ENCODE measurements at regions of chr14 and their contacts with region 1.

Region 1: GRCh38 chr14:54773171-54773975 is 129.3 kb downstream of the GCH1 start:
- DNase-seq: peak; percentile 76
- ATAC-seq: peak; percentile 92
- H3K4me3 Mint-ChIP-seq: 0 out of 2 replicates have a peak overlapping the region, but pooled peaks have one; percentile 29
- H3K27ac Mint-ChIP-seq: peak overlapping the region; percentile 56
- H3K4me1 Mint-ChIP-seq: peaks cover 21% of the 10 kb centered on the region
- H3K27me3 Mint-ChIP-seq: no peaks in the 10 kb centered on the region
- CTCF ChIP-seq: peak; percentile 37

Region 2: GRCh38 chr14:54566410-54567223 is 206.8 kb before region 1 on chr14 and contains the start of gene SAMD4A:
- CTCF ChIA-PET with region 1: interaction called, 138 read pairs
- POLR2A ChIA-PET with region 1: interaction called, 19 read pairs
- DNase-seq: peak; percentile 65
- ATAC-seq: peak; percentile 13
- H3K4me3 Mint-ChIP-seq: peak within 1 kb of the TSS; percentile 94
- H3K27ac Mint-ChIP-seq: 0 out of 2 replicates have a peak within 1 kb of the TSS, but pooled peaks have one; percentile 70
- H3K4me1 Mint-ChIP-seq: peaks cover 21% of the 10 kb centered on the region
- H3K27me3 Mint-ChIP-seq: peaks cover 36% of the 10 kb centered on the region
- CTCF ChIP-seq: no peak
- total RNA-seq, gene SAMD4A: 5.2 to 6.0 TPM (median 5.3 TPM) in 3 replicates

Region 3: DNA sequence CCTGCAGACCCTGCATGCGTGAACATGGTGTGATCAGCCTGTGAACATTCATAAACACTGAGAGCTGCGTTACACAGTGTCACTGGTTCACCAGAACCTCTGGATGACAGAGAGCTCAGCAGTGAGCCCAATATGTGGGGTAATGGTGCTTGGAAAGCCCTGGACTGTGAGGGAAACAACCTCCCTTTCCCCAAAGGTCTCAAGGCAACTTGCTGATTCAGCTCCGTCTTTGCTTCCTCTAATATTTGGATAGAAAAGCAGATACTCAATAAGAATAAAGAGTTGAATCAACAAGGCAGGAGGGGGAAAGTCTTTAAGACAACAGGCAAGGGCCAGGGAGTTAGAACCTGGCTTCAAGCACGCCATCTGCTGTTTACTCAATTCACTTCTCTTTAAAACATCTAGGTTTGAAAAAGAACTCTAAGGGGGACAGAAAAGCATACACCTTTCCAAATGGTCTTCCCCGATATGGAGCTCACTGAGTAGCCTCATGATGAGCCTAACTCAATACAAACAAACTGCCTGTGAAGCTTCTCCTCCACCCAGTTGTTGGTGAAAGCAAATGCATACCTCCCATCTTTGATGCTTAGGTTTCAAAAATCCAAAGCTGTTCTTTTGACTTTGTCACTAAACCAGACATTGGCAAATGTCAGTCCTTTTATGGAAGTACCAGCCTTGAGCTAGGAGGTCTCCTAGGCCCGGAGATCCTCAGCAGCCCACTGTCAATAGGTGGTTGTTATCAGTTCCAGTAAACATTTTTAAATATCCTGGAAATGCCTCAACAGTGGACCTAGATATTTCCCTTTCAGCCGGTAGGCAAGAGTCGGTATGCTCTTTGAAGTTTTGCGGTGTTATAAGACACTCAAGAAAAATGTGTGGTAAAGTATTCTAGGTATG is 130.3 kb before region 1 on chr14:
- CTCF ChIA-PET with region 1: interaction called, 17 read pairs
- POLR2A ChIA-PET with region 1: no interaction called
- DNase-seq: no peak
- ATAC-seq: peak; percentile 73
- H3K4me3 Mint-ChIP-seq: no peak overlapping the region
- H3K27ac Mint-ChIP-seq: no peak overlapping the region
- H3K4me1 Mint-ChIP-seq: peaks cover 19% of the 10 kb centered on the region
- H3K27me3 Mint-ChIP-seq: no peaks in the 10 kb centered on the region
- CTCF ChIP-seq: no peak

Region 4: DNA sequence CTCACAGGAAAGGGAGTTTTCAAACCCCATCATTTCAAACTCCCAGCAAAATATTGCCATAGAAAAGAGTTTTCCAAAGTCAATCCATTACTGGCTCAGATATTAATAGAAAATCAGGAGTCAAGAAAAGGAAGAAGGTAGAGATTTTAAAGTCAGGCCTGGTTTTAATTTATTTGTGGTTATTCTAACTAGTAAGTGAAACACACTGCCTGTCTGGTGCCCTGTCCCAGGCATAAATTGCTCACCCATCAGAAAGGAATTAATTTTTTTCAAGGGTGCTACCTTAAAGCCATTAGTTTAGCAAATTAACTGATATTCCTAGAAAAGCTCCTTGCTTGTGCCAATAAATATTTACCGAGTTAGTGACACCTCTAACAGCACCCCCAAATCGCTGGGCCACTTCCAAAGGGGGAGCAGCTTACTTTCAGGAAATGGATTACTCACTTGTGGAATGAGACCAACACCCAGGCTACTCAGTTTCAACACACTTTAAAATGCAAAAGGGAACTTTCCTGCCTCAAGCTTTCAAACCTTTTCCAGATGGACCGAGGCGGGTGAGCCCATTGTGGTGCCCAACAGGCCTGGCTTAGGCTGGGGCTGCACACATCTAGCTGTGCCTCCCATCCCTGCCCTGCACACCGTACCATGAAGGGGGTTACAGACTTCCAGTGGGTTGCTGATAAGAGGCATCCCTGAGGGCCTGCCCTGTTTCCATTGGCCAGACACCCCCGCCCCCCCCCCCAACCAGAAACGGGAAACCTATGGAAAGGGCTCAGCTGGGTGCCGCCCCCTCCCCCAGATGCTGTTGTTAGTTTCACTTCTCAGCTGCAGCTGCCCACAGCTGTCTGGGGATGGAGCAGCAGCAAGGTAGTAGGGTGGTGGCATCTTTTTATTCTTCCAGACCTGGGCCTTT is 89.2 kb before region 1 on chr14:
- CTCF ChIA-PET with region 1: interaction called, 31 read pairs
- POLR2A ChIA-PET with region 1: no interaction called
- DNase-seq: peak; percentile 69
- ATAC-seq: peak; percentile 88
- H3K4me3 Mint-ChIP-seq: peak overlapping the region; percentile 50
- H3K27ac Mint-ChIP-seq: peak overlapping the region; percentile 81
- H3K4me1 Mint-ChIP-seq: peaks cover 36% of the 10 kb centered on the region
- H3K27me3 Mint-ChIP-seq: no peaks in the 10 kb centered on the region
- CTCF ChIP-seq: no peak

Region 5: DNA sequence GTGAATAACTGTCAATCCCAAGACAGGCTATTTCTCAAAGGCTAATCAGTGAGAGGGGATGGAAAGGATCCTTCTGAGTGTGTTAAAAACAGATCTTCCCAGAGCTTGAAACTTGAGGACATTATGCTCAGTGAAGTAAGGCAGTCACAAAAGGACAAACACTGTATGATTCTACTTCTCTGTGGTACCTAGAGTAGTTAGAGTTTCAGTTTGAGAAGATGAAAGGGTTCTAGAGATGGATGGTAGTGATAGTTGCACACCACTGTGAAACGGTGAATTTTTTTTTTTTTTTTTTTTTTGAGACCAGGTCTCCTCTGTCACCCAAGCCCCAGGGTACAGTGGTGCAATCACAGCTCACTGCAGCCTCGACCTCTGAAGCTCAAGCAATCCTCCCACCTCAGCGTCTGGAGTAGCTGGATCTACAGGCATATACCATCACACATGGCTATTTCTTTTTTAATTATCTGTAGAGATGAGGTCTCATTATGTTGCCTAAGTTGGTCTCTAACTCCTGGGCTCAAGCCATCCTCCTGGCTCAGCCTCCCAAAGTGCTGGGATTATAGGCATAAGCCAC is 72.6 kb before region 1 on chr14:
- CTCF ChIA-PET with region 1: interaction called, 17 read pairs
- POLR2A ChIA-PET with region 1: no interaction called
- DNase-seq: no peak
- ATAC-seq: no peak
- H3K4me3 Mint-ChIP-seq: no peak overlapping the region
- H3K27ac Mint-ChIP-seq: no peak overlapping the region
- H3K4me1 Mint-ChIP-seq: peaks cover 12% of the 10 kb centered on the region
- H3K27me3 Mint-ChIP-seq: no peaks in the 10 kb centered on the region
- CTCF ChIP-seq: no peak

Region 6: GRCh38 chr14:54737132-54737711 is 36.2 kb before region 1 on chr14:
- CTCF ChIA-PET with region 1: interaction called, 12 read pairs
- POLR2A ChIA-PET with region 1: no interaction called
- DNase-seq: no peak
- ATAC-seq: no peak
- H3K4me3 Mint-ChIP-seq: no peak overlapping the region
- H3K27ac Mint-ChIP-seq: no peak overlapping the region
- H3K4me1 Mint-ChIP-seq: peaks cover 18% of the 10 kb centered on the region
- H3K27me3 Mint-ChIP-seq: no peaks in the 10 kb centered on the region
- CTCF ChIP-seq: no peak

Region 7: DNA sequence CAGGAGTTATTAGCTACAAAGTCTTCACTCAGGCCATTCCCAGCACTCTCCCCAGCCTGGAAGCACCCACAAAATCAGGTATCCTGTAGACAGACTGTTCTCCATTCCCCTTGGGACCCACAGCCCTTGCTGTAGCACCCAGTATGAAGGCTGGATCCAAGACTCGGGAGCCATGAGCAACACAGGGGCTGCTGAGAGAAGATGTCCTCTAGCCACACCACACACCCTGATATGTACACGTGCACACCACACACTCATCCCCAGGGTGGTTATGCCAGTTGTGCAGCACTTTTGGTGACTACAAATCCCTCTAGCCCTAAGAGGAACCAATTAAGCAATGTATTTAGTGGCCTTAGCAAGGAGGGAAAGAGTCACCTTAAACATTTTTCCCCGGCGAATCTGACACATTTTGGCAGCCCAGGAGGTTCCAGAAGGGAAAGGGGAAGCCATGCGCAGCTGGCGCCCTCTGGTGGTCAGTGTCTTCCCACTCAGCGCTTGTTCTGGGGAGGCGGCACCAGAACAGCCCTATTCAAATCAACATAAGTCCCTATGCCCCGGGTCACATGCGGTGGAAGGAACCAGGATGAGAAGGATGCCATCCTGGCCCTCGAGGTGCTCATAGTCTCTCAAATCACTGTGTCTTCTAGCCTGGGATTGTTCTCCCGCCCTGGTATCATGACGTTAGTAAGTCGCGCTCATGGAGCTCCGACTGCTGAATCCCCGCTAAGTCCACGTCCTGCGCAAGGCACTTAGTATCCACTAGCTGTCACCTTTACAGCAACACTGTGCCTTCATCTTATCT is 32.3 kb after region 1 on chr14:
- CTCF ChIA-PET with region 1: interaction called, 39 read pairs
- POLR2A ChIA-PET with region 1: no interaction called
- DNase-seq: peak; percentile 93
- ATAC-seq: peak; percentile 85
- H3K4me3 Mint-ChIP-seq: no peak overlapping the region
- H3K27ac Mint-ChIP-seq: no peak overlapping the region
- H3K4me1 Mint-ChIP-seq: peaks cover 21% of the 10 kb centered on the region
- H3K27me3 Mint-ChIP-seq: peaks cover 9% of the 10 kb centered on the region
- CTCF ChIP-seq: peak; percentile 95